Heart left ventricle (tissue), 16 donors: ENCODE measurements at regions of chr3 and their contacts with region 1.

Region 1: DNA sequence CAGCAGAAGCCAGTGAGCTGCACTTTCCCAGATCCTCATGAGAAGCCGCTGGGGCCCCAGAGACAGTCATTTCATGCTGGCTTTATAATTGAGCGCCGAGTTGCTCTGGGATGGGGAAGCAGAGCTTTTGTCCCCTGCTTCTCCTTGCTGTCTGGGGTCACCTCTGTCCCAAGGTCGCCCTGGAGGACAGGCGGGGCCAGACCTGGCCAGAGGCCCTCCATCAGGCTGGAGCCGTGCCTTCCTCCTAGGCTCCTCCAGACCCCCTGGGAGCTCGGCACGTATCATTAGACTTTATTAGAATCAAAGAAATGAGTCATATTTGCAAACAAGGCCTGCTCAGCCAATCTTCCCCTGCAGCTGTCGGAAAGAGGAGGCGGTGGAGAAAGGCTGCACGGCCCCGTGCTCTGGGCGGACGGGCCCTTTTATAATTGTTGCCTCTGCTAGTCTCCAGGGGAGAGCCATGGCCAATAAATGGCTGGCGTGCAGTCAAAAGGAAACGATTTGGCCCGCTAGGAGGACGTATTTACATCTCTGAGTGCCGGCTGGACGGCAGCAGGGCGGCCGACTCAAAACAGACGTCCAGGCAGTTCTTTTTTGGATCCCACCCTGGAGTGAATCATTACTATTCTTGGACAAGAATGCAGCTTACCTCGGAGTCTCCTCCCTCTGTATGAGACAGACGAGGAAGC is 50.4 kb downstream of the SLC6A6 start:
- DNase-seq: peak; percentile 91 to 95 (median 93)
- ATAC-seq: peak; percentile 86 to 93 (median 88)
- H3K4me3 ChIP-seq: no peak overlapping the region
- H3K27ac ChIP-seq: peak overlapping the region; percentile 5 to 94 (median 80)
- H3K4me1 ChIP-seq: peaks cover 19 to 72% (median 39%) of the 10 kb centered on the region in 12 donors
- H3K27me3 ChIP-seq: peaks cover 0 to 12% (median 0%) of the 10 kb centered on the region in 9 donors
- CTCF ChIP-seq: peak in 5 of 12 donors; percentile 6 to 40 (median 25)
- POLR2A ChIP-seq: no peak

Region 2: GRCh38 chr3:14358426-14359211 is 94.2 kb before region 1 on chr3:
- intact Hi-C with region 1: no loop called
- DNase-seq: peak; percentile 52 to 82 (median 64)
- ATAC-seq: peak; percentile 70 to 85 (median 80)
- H3K4me3 ChIP-seq: peak overlapping the region in 1 of 12 donors; percentile 5
- H3K27ac ChIP-seq: peak overlapping the region in 6 of 12 donors; percentile 14 to 62 (median 46)
- H3K4me1 ChIP-seq: peaks cover 0 to 8% (median 3%) of the 10 kb centered on the region in 12 donors
- H3K27me3 ChIP-seq: peaks cover 0 to 18% (median 0%) of the 10 kb centered on the region in 9 donors
- CTCF ChIP-seq: no peak
- POLR2A ChIP-seq: no peak

Region 3: DNA sequence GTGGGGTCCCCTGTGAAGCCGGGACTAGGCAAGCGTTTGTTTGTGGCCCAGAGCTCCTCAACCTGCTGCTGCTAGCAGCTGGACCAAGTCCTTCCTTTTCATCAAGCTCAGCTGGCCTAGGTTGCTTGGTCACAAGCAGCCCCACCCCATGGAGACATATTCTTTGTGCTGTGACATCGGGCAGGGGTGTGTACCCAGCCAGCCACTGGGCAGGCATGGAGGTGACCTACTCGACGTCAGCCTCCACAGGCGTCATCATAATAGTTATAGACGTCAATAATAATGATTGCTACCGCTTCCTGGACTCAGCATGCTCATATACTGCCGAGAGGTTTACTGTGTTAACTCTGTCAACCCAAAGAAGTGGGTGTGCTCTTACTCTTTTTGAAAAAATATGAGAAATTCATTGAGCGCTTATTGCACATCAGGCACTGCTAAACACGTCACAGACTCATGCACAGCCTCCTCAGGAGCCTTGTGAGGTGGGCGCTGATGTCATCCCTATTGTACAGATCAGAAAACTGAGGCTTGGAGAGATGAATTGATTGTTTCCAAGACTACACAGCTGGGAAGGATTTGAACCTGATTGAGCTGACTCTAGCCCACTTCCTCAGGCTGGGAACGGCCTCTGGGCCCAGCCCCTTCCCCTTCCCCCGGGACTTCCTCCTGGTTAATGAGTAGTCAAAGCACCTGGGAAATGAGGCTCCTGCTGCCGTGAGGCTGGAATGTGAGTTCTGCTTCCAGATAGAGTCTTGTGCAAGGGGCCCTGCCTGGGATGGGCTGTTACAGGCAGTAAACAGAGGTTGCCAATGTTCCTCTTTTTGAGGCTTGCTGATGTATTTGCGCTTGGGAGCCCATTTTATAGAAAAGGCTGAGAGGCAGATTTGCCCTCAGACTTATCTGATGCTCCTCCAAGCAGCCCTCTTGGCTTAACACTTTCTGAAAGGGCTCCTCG is 34.2 kb before region 1 on chr3:
- intact Hi-C with region 1: no loop called
- DNase-seq: peak in 1 of 5 donors; percentile 50
- ATAC-seq: peak in 2 of 4 donors; percentile 8 to 25
- H3K4me3 ChIP-seq: no peak overlapping the region
- H3K27ac ChIP-seq: peak overlapping the region in 1 of 12 donors; percentile 50
- H3K4me1 ChIP-seq: peaks cover 0 to 50% (median under 1%) of the 10 kb centered on the region in 12 donors
- H3K27me3 ChIP-seq: peaks cover 0 to 12% (median 0%) of the 10 kb centered on the region in 9 donors
- CTCF ChIP-seq: no peak
- POLR2A ChIP-seq: no peak

Region 4: GRCh38 chr3:14431892-14432834 is 20.7 kb before region 1 on chr3:
- intact Hi-C with region 1: loop called in 1 of 10 experiments (anchors 2 kb)
- DNase-seq: peak; percentile 85 to 95 (median 89)
- ATAC-seq: peak; percentile 80 to 88 (median 85)
- H3K4me3 ChIP-seq: peak overlapping the region in 2 of 12 donors; percentile 2 to 36
- H3K27ac ChIP-seq: peak overlapping the region; percentile 1 to 97 (median 65)
- H3K4me1 ChIP-seq: peaks cover 14 to 100% (median 67%) of the 10 kb centered on the region in 12 donors
- H3K27me3 ChIP-seq: no peaks in the 10 kb centered on the region
- CTCF ChIP-seq: no peak
- POLR2A ChIP-seq: no peak